Dendritic cell treated with granulocyte-macrophage colony-stimulating factor and Interleukin-4, amounts not matched to agents 40 ng/mL and 50 ng/mL, for 4 days (primary cell): ENCODE measurements at regions of chr19 and their contacts with region 1.

Region 1: DNA sequence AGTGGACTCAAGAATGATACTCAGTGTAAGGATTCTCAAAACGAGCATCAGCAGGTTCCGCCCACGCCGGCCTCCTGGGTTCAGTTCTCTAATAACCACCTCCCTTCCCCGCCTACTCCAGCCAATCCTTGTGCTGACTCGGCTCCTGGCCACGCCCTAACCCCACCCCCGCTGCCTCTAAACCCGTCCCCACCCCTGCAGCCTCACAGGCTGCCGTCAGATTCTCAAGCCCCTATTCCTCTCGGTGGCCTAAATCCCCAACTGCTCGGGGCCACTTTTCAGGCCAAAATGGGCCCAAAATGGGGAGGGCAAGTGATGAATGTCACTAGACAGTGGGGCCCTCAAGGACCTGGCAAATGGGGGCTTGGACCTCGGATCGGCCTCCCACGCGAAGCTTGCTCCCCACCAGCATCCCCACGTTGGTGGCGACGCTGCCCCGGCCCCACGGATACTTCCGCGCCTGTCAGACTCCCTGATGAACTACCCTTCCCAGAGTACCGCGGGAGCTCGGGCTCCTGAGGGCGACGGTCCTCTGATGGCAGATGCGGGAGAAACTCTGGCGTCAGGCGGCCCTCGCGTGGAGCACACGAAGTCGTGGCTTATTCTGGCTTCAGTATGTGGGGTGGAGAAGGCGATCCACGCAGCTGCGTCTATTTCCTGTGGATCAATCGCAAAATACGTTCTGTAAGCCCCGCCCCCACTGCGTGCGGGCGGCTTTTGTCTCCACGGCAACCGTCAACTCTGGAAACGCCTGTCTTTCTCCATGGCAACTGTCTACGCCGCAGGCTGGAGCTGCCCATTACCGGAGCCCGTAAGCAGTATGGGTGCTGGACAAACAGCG is 24.8 kb downstream of the ZNF473 start:
- H3K4me3 Mint-ChIP-seq: peak overlapping the region; percentile 77
- H3K27ac Mint-ChIP-seq: peak overlapping the region; percentile 69
- H3K4me1 Mint-ChIP-seq: peaks cover 17% of the 10 kb centered on the region
- H3K27me3 Mint-ChIP-seq: peaks cover 18% of the 10 kb centered on the region

Region 2: DNA sequence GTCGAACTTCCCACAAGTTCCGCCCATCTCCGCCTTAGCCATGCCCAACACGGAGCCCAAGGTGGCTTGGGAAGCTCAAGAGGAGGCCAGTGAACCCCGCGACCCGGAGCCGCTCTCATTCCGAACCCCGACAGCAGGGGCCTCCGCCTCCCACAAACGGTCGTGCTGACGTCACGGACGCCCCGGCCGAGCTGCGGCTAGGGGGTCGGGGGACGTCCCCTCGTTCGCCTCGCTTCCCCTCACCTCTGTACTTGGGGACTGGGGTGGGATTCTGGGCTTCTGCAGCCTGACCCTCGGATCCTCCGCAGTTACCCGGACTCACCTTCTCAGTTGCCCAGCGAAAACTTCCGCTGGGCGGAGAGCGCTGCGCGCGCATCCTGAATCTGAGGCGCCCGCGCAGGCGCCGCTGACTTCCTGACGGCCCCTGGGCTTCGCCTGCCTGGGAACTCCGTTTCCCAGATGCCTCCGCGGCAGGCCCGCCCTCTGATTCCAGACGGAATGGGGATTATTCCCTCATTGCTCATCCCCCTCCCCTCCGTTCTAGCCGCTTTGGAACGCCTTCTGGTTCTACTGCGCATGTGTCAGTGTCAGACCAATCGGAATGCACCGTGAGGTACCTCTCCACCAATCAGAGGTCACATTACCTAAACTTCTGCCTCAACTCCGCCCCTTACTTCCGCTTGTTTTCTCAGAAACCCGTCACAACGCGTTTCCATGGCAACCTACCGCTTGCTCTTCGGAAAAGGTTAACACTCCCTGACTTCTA is 25.4 kb before region 1 on chr19 and contains the start of gene VRK3:
- intact Hi-C with region 1: loop called (anchors 1 kb)
- H3K4me3 Mint-ChIP-seq: peak within 1 kb of the TSS; percentile 87
- H3K27ac Mint-ChIP-seq: peak within 1 kb of the TSS; percentile 95
- H3K4me1 Mint-ChIP-seq: peaks cover 42% of the 10 kb centered on the region
- H3K27me3 Mint-ChIP-seq: no peaks in the 10 kb centered on the region